ENCODE measurements at regions of chr14 and their contacts with region 1.

Region 1: DNA sequence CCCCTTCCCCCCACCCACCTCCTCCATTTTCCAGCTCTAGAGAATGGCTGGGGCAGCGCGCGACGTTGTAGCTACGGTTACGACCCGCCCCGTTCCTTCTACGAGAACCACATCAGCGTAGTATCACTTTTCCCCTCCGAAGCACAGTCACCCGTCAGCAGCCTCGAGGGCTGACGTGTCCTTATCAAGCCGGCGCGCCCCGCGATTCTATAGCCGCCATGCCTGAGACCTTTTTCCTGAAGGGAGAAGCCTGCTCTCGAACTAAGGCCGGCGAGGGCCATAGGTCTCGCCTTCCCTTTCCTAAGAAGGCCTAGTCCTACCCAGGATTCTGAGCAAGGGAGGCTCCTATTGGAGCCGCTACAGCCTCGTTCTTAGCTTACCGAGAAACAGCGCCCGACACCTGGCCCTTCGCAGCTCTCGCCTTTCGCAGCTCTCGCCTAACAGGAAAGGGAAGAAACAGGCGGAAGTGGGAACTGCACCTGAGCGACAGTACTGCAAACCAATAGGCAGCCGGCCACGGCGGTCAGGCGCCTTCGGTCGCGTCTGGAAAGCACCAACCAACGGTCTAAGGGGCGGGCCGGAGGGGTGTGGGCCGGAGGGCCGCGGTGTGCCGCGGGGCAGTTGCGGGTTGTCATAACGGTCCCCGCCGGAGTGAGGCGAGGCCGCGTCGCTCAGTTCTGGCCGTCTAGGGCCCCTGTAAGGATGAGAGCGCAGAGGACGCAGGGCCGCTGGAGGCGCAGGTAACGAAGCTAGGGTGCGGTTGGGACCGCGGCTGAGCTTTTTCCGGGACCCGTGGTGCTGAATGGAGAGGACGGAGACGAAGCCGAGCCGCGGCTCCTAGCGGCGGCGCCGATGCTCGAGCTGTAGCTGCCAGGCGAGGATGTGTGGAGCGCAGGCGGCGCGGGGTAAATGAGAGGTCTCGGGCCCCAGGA is at the starts of genes MGAT2 and RPL36AL:
- DNase-seq: peak; percentile 98
- H3K4me3 ChIP-seq: peak within 1 kb of the TSS; percentile 97 to 100 (median 98)
- H3K27ac ChIP-seq: peak within 1 kb of the TSS; percentile 96
- H3K4me1 ChIP-seq: peaks cover 40% of the 10 kb centered on the region
- H3K27me3 ChIP-seq: no peaks in the 10 kb centered on the region
- CTCF ChIP-seq: peak in 1 of 2 donors; percentile 39
- total RNA-seq, gene MGAT2: 40.5 to 41.8 TPM
- total RNA-seq, gene RPL36AL: 78.7 to 214 TPM

Region 2: DNA sequence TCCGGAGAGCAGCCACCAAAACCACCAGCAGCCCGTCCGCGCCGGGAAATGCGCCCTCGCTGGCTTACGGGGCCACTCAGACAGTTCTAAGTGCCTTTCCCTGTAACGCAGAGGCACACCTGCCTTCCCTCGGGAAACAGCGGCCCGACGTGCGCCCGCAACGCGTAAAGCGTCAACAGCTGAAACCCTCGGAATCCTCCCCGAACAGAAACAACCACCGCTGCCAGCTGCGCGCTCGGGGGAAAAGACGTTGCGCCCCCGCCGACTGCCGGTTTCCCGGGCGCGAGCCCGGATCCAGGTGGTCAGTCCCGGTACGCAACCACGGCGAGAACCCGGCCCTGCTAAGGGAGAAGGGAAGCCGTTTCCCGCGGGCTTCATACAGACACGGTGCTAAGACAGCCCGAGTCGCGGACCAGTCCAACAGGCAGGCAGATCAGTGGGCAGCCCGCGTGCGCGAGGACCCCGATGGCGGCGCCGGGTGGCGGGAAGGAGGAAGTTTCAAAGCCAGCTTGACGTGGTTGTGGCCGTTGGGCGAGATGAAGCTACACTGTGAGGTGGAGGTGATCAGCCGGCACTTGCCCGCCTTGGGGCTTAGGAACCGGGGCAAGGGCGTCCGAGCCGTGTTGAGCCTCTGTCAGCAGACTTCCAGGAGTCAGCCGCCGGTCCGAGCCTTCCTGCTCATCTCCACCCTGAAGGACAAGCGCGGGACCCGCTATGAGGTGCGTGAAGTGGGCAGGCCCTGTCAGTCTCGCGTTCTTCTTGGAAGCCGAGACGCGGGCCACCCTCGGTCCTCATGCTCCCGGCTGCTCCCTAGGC is 21.8 kb before region 1 on chr14 and contains the start of gene LRR1:
- CTCF ChIA-PET with region 1: no interaction called
- dilution Hi-C with region 1: no loop called
- in situ Hi-C with region 1: no loop called
- intact Hi-C with region 1: loop called (anchors 1 kb)
- DNase-seq: peak; percentile 86
- H3K4me3 ChIP-seq: peak within 1 kb of the TSS; percentile 65 to 87 (median 79)
- H3K27ac ChIP-seq: peak within 1 kb of the TSS; percentile 88
- H3K4me1 ChIP-seq: peaks cover 3% of the 10 kb centered on the region
- H3K27me3 ChIP-seq: no peaks in the 10 kb centered on the region
- CTCF ChIP-seq: no peak
- total RNA-seq, gene LRR1: 8.3 to 20.7 TPM